T-cell (primary cell): ENCODE measurements at regions of chr1 and their contacts with region 1.

Region 1: DNA sequence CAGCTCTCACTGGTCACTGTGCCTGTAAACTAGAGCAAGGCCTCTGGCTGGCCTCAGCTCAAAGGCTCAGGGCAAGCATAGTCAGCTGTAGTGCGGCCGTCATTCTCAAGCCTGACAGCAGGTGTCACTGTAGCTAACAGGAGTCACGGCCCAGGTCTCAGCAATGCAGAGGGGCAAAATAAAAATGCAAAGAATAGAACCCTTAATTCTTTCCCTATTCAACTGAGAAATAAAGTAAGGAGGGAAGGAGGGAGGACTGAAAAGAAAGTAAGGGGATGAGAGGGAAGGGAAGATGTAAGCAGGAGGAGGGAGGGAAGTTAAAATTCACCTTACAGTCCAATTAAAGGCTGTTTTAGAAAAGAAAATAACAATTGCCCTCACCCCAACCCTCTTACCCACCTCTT is 106.1 kb downstream of the KIAA0319L start:
- DNase-seq: peak; percentile 41 to 86 (median 72)
- ATAC-seq: peak; percentile 87 to 91 (median 91)
- H3K4me3 ChIP-seq: no peak overlapping the region
- H3K4me3 Mint-ChIP-seq: peak overlapping the region in 1 of 3 donors; percentile 21
- H3K27ac ChIP-seq: peak overlapping the region; percentile 39
- H3K27ac Mint-ChIP-seq: peak overlapping the region; percentile 91 to 94
- H3K4me1 ChIP-seq: peaks cover 14 to 21% of the 10 kb centered on the region in 2 experiments
- H3K4me1 Mint-ChIP-seq: peaks cover 30 to 39% (median 33%) of the 10 kb centered on the region in 3 donors
- H3K27me3 ChIP-seq: no peaks in the 10 kb centered on the region
- H3K27me3 Mint-ChIP-seq: no peaks in the 10 kb centered on the region

Region 2: DNA sequence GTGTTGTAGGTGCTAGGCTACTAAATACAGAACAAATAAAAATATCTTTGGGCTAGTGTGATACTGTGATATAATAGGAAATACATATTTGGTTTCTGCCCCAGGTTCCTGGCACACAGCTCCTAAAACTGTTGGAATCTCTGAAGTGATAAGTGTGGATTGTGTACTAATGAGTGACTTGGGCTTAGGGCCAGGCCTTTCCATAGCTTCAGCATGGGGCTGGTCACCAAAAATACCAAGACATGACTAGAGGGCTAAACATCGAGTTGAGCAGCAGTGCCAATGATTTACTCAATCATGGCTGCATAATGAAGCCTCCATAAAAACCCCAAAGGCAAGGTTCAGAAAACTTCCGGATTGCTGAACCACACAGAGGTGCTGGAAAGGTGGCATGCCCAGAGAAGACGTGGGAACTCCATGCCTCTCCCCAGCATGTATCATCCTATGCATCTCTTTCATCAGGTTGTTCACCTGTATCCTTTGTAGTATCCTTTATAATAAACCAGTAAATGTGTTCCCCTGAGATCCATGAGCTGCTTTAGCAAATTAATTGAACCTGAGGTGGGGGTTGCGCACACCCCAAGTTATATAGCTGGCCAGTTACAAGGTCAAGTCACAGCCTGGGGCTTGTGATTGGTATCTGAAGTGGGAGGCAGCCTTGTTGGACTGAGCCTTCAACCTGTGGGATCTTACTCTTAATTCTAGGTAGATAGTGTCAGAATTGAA is 131.0 kb before region 1 on chr1:
- CTCF ChIA-PET with region 1: no interaction called
- POLR2A ChIA-PET with region 1: no interaction called
- DNase-seq: no peak
- ATAC-seq: no peak
- H3K4me3 ChIP-seq: no peak overlapping the region
- H3K4me3 Mint-ChIP-seq: no peak overlapping the region
- H3K27ac ChIP-seq: no peak overlapping the region
- H3K27ac Mint-ChIP-seq: no peak overlapping the region
- H3K4me1 ChIP-seq: no peaks in the 10 kb centered on the region
- H3K4me1 Mint-ChIP-seq: peaks cover 18 to 32% (median 22%) of the 10 kb centered on the region in 3 donors
- H3K27me3 ChIP-seq: no peaks in the 10 kb centered on the region
- H3K27me3 Mint-ChIP-seq: no peaks in the 10 kb centered on the region

Region 3: DNA sequence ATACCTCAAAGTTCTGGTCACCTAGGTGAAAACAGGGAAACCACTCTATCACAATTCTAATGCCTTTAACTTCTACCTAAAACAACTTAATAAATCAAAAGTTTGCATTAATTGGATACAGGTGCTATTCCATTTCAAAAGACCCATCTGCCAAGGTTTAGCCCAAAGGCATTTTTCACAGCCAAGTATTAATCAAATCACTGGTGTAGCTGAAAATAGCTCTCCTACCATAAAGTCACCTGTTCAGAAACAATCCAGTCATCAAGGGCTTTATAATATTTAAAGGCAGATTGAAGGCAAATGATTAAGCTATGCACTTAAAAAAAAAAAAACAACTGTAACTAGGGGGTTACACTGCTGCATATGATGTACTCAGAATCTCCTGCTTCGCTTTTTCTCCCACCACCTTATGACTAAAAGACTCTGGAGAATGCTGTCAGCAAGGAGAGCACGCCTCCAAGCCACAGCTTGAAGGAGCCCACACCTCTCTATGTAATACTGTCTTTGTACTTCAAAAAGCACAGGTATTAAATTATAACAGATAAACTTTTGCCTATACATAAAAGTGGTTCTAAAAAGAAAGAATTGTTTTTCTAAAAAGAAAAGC is 85.5 kb after region 1 on chr1:
- CTCF ChIA-PET with region 1: interaction called, 4 to 19 read pairs
- POLR2A ChIA-PET with region 1: interaction called, 3 to 4 read pairs
- DNase-seq: peak in 1 of 35 experiments; percentile 29
- ATAC-seq: peak in 1 of 4 experiments; percentile 28
- H3K4me3 ChIP-seq: no peak overlapping the region
- H3K4me3 Mint-ChIP-seq: peak overlapping the region in 2 of 3 donors; percentile 49 to 68
- H3K27ac ChIP-seq: peak overlapping the region; percentile 68
- H3K27ac Mint-ChIP-seq: peak overlapping the region; percentile 88 to 97
- H3K4me1 ChIP-seq: peaks cover 37 to 57% of the 10 kb centered on the region in 2 experiments
- H3K4me1 Mint-ChIP-seq: peaks cover 76 to 78% (median 77%) of the 10 kb centered on the region in 3 donors
- H3K27me3 ChIP-seq: no peaks in the 10 kb centered on the region
- H3K27me3 Mint-ChIP-seq: no peaks in the 10 kb centered on the region

Region 4: DNA sequence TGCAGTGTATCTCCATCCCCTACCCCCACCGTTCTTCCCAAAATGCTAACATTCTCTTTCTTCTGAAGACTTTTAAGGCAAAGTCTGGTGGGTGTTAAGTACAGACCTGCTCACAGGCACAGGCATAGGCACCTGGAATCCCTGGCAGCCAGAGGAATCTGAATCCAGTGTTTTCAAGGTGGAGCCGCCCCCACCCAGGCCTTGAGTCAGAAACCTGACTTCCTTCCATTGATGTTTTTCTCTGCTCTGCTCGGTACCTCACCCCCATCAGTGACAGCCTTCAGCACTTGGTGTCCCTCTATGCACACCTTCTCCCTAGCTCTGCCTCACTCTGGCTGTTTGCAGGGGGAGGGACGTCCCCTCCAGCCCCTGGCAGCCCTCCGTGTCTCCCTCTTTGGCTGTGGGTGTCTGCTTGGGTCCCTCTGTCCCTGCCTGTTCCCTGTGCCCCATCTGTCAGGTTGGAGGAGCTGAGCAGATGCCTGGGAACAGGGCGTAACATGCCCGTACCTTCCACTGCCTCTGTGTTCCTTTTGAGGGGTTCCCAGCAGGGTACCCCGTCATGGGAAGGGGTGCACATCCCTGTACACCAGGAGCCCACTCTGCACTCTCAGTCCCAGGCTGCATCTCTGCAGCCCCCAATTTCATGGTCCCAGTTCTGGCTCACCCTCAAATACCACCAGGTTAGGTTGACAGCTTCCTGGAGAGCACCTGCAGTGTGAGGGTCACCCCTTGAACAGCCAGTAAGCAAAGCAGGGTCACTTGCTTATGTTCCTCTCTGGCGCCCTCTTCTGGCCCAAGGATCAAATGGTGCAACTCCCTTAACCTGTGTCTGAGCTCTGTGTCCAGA is 113.1 kb after region 1 on chr1:
- CTCF ChIA-PET with region 1: interaction called, 14 to 56 read pairs
- POLR2A ChIA-PET with region 1: no interaction called
- DNase-seq: peak; percentile 48 to 89 (median 73)
- ATAC-seq: peak; percentile 61 to 76 (median 70)
- H3K4me3 ChIP-seq: no peak overlapping the region
- H3K4me3 Mint-ChIP-seq: peak overlapping the region in 1 of 3 donors; percentile 28
- H3K27ac ChIP-seq: no peak overlapping the region
- H3K27ac Mint-ChIP-seq: peak overlapping the region; percentile 56 to 76
- H3K4me1 ChIP-seq: peaks cover 0 to 16% of the 10 kb centered on the region in 2 experiments
- H3K4me1 Mint-ChIP-seq: peaks cover 40 to 47% (median 44%) of the 10 kb centered on the region in 3 donors
- H3K27me3 ChIP-seq: no peaks in the 10 kb centered on the region
- H3K27me3 Mint-ChIP-seq: no peaks in the 10 kb centered on the region

Region 5: DNA sequence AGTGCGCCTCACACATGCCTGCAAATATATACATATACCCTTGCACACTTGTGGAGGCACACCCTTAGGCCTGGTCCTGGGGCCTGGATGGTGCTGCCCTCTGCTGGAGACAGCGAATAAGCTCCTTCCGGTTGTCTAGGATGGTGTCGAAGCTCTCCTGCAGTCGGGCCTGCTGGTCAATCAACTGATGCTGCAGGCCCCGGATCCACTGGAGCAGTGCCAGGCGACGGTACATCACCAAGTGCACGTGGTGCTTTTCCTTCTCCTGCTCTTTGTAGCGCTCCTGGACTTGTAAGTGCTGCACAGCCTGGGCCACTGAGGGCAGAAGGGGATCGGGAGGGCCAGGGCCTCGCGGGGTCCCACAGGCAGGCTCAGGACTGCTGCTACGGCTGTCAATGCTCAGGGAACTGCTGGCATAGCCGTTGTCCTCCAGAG is 264.5 kb after region 1 on chr1:
- CTCF ChIA-PET with region 1: interaction called, 7 to 23 read pairs
- POLR2A ChIA-PET with region 1: no interaction called
- DNase-seq: peak; percentile 49 to 86 (median 71)
- ATAC-seq: peak; percentile 53 to 63 (median 56)
- H3K4me3 ChIP-seq: no peak overlapping the region
- H3K4me3 Mint-ChIP-seq: peak overlapping the region in 1 of 3 donors; percentile 39
- H3K27ac ChIP-seq: no peak overlapping the region
- H3K27ac Mint-ChIP-seq: no peak overlapping the region
- H3K4me1 ChIP-seq: peaks cover 3 to 40% of the 10 kb centered on the region in 2 experiments
- H3K4me1 Mint-ChIP-seq: peaks cover 31 to 42% (median 32%) of the 10 kb centered on the region in 3 donors
- H3K27me3 ChIP-seq: peaks cover 0 to 3% of the 10 kb centered on the region in 2 experiments
- H3K27me3 Mint-ChIP-seq: no peaks in the 10 kb centered on the region